IMR-90 (cell line): ENCODE measurements at regions of chr12 and their contacts with region 1.

Region 1: GRCh38 chr12:81268664-81268926 is 190.7 kb downstream of the ACSS3 start:
- DNase-seq: no peak
- ATAC-seq: no peak
- H3K4me3 ChIP-seq: no peak overlapping the region
- H3K27ac ChIP-seq: no peak overlapping the region
- H3K4me1 ChIP-seq: no peaks in the 10 kb centered on the region
- H3K27me3 ChIP-seq: no peaks in the 10 kb centered on the region
- CTCF ChIP-seq: peak; percentile 15; the same call in 1 of the 2 replicates
- POLR2A ChIP-seq: no peak
- RAD21 ChIP-seq: no peak

Region 2: DNA sequence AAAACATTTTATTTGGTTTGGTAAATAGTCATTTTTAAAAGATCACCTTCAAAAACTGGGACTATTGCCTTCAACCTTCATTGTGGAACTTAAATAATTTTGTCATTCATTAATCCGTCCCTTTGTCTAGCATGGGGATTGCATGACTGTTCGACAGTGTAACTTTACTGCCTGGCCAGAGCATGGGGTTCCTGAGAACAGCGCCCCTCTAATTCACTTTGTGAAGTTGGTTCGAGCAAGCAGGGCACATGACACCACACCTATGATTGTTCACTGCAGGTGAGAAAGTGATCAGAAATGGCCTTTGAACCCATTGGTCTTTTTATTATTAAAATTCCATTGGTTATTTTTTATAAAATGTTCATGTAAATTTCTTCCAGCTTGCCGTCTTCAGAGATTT is 598.4 kb before region 1 on chr12:
- CTCF ChIA-PET with region 1: no interaction called
- POLR2A ChIA-PET with region 1: no interaction called
- dilution Hi-C with region 1: no loop called
- in situ Hi-C with region 1: no loop called
- intact Hi-C with region 1: no loop called
- DNase-seq: no peak
- ATAC-seq: no peak
- H3K4me3 ChIP-seq: no peak overlapping the region
- H3K27ac ChIP-seq: no peak overlapping the region
- H3K4me1 ChIP-seq: no peaks in the 10 kb centered on the region
- H3K27me3 ChIP-seq: no peaks in the 10 kb centered on the region
- CTCF ChIP-seq: no peak
- POLR2A ChIP-seq: no peak
- RAD21 ChIP-seq: no peak

Region 3: DNA sequence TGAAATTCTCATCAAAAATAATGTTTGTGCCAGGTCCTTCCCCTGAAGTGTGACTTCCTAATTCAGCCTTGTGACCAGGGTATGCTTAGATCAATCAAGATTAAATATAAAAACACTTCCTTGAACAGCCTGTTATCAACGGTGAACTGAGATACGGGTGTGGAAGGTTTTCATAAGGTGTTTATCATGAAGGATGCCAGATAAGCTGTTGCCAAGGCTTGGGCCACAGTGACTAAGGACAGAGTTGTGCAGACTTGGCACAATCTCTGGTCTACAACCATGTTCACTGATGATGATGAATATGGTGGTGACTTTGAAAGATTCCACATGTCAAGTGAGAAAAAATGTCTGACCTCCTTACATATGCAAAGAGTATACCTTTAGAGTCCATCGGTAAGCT is 279.6 kb before region 1 on chr12:
- CTCF ChIA-PET with region 1: no interaction called
- POLR2A ChIA-PET with region 1: no interaction called
- dilution Hi-C with region 1: no loop called
- in situ Hi-C with region 1: no loop called
- intact Hi-C with region 1: loop called (anchors 10 kb)
- DNase-seq: no peak
- ATAC-seq: no peak
- H3K4me3 ChIP-seq: no peak overlapping the region
- H3K27ac ChIP-seq: no peak overlapping the region
- H3K4me1 ChIP-seq: no peaks in the 10 kb centered on the region
- H3K27me3 ChIP-seq: no peaks in the 10 kb centered on the region
- CTCF ChIP-seq: no peak
- POLR2A ChIP-seq: no peak
- RAD21 ChIP-seq: no peak

Region 4: GRCh38 chr12:81360916-81361315 is 92.3 kb after region 1 on chr12:
- CTCF ChIA-PET with region 1: no interaction called
- POLR2A ChIA-PET with region 1: no interaction called
- dilution Hi-C with region 1: no loop called
- in situ Hi-C with region 1: no loop called
- intact Hi-C with region 1: no loop called
- DNase-seq: no peak
- ATAC-seq: no peak
- H3K4me3 ChIP-seq: no peak overlapping the region
- H3K27ac ChIP-seq: no peak overlapping the region
- H3K4me1 ChIP-seq: no peaks in the 10 kb centered on the region
- H3K27me3 ChIP-seq: no peaks in the 10 kb centered on the region
- CTCF ChIP-seq: no peak
- POLR2A ChIP-seq: no peak
- RAD21 ChIP-seq: no peak